Tibial artery (tissue), 4 donors: ENCODE measurements at regions of chrX and their contacts with region 1.

Region 1: GRCh38 chrX:87338510-87338909 is 179.1 kb upstream of the KLHL4 start:
- DNase-seq: no peak
- H3K4me3 ChIP-seq: no peak overlapping the region
- H3K27ac ChIP-seq: no peak overlapping the region
- H3K4me1 ChIP-seq: no peaks in the 10 kb centered on the region
- H3K27me3 ChIP-seq: no peaks in the 10 kb centered on the region
- CTCF ChIP-seq: peak; percentile 40 to 42

Region 2: DNA sequence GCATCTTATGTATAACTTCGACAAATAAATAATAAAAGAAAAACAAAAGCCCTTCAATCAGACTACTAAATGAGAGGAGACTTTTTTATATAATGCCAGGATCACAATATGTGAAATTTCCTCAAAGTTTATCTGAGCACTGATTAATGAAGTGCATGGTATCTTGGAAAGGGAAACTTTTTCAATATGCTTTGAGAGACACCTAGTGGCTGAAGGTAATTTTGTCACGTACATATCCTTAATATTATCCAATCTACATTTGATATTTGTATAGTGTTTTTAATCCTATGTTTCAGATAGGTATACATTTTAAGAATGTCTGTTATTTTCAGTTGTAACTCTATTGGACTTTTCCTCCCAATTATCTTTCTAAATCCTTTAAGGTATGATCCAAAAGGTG is 325.9 kb after region 1 on chrX:
- intact Hi-C with region 1: loop called (anchors 5 kb)
- DNase-seq: no peak
- H3K4me3 ChIP-seq: no peak overlapping the region
- H3K27ac ChIP-seq: no peak overlapping the region
- H3K4me1 ChIP-seq: no peaks in the 10 kb centered on the region
- H3K27me3 ChIP-seq: no peaks in the 10 kb centered on the region
- CTCF ChIP-seq: peak; percentile 37 to 45